ENCODE measurements at regions of chr6 and their contacts with region 1.

Region 1: DNA sequence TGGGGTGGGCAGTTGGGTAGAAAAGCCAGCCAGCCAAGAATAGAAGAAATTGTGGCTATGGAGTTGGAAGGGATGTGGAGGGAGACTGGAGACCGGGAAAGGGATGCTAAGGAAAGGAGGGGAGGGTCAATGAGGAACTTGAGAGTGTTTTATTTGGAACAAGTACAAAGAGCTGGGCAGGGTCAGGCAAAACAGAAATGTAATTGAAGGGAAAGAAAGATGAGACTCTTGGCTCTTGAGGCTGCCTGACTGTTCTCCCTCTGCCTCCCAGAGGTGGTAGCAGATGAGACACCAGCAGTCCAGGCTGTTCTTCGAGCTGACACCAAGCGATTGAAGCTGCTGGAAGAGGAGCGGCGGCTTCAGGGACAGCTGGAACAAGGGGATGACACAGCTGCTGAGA is 12.7 kb downstream of the ABCF1 start:
- DNase-seq: no peak
- H3K4me3 ChIP-seq: no peak overlapping the region
- H3K27ac ChIP-seq: no peak overlapping the region
- H3K4me1 ChIP-seq: peaks cover 5% of the 10 kb centered on the region; the same call in 1 of the 2 replicates
- H3K27me3 ChIP-seq: no peaks in the 10 kb centered on the region
- CTCF ChIP-seq: no peak

Region 2: GRCh38 chr6:30556066-30556905 is 27.6 kb before region 1 on chr6 and contains the start of gene GNL1:
- CTCF ChIA-PET with region 1: no interaction called
- POLR2A ChIA-PET with region 1: interaction called, 21 read pairs
- intact Hi-C with region 1: no loop called
- DNase-seq: peak; percentile 89 to 99
- H3K4me3 ChIP-seq: peak within 1 kb of the TSS; percentile 99
- H3K27ac ChIP-seq: peak within 1 kb of the TSS; percentile 79
- H3K4me1 ChIP-seq: peaks cover 17% of the 10 kb centered on the region
- H3K27me3 ChIP-seq: no peaks in the 10 kb centered on the region
- CTCF ChIP-seq: no peak
- total RNA-seq, gene GNL1: 114 and 123 TPM in 2 replicates